Heart left ventricle (tissue), 16 donors: ENCODE measurements at regions of chrX and their contacts with region 1.

Region 1: DNA sequence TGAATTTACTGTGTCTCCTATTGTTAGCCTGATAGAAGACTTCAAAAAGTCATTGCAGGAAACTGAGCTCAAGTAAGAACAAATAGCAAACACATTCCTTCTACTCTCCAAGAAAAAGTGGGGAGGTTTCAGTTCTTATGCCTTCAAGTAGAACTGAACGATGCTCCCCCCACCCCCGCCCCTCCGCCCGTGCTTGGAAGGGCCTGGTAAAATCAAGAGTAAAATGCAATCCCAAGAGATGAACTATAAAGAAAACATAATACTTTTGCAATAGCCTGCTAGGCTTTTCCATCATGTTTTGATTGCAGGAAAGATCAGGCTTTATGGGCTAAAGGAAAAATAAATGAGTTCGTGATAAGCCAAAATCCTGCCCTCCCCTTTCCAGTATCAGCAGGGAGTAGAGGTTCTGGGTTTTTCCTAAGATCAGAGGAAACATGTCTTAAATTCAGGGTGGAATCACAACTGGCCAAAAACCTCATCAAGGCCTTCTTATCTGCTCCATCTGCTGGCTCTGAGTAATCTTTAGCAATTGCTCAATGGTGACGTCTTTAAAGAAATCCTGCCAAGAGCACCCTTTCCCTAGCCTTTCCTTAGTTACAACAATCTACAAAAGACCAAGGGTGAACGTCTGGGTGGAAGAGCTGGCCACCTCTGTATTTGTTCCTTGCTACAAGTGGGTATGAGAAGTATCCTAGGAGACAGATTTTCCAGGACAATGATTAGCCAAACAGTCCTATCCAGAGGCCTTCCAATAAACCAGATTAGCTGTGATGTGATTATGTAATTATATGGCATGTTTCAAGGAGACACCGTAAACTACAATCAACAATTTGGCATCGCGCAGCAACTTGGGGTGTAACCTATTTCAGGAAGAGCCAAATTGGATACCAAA is 66.3 kb upstream of the FAM9C start:
- DNase-seq: peak in 3 of 5 donors; percentile 38 to 42 (median 38)
- ATAC-seq: peak; percentile 81 to 93 (median 90)
- H3K4me3 ChIP-seq: no peak overlapping the region
- H3K27ac ChIP-seq: peak overlapping the region; percentile 33 to 86 (median 72)
- H3K4me1 ChIP-seq: peaks cover 0 to 29% (median 6%) of the 10 kb centered on the region in 12 donors
- H3K27me3 ChIP-seq: no peaks in the 10 kb centered on the region
- CTCF ChIP-seq: no peak
- POLR2A ChIP-seq: peak in 1 of 2 donors; percentile 15

Region 2: DNA sequence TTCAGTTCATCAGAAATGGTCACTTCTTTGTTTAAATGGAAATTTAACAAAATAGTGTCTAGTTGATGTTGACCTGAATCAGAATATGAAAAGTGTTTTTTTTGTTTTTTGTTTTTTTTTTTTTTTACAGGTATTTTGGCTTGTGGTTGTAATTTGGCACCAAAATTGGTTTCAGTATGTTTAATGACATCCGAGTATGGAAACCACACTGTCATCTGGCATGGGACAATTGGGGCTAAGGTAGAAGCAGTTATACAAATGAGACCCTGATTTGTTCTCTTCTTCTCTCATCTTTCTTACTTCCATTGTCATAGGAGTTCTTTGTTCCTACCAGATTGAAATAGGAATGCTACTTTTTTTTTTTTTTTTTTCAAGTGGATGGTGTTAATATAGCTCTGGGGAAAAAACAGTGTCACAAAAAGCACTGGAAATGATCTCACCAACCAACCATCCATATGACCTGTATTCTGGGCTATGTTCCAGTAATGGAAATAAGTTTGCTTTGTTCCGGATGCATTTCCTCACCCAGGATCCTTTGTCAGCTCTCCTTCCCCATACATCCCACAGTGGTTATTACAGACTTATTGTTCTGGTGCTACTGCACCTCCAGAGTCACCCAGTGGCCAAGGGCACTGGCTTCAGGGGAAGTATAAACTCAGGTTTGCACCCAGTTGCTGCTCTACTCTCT is 113.3 kb after region 1 on chrX:
- intact Hi-C with region 1: loop called in 2 of 10 experiments (anchors 1 to 10 kb)
- DNase-seq: peak in 2 of 5 donors; percentile 20 to 25
- ATAC-seq: peak; percentile 78 to 90 (median 86)
- H3K4me3 ChIP-seq: no peak overlapping the region
- H3K27ac ChIP-seq: peak overlapping the region in 7 of 12 donors; percentile 2 to 65 (median 42)
- H3K4me1 ChIP-seq: peaks cover 0 to 20% (median 2%) of the 10 kb centered on the region in 12 donors
- H3K27me3 ChIP-seq: peaks cover 0 to 8% (median 0%) of the 10 kb centered on the region in 9 donors
- CTCF ChIP-seq: peak in 2 of 12 donors; percentile 8 to 9
- POLR2A ChIP-seq: no peak

Region 3: DNA sequence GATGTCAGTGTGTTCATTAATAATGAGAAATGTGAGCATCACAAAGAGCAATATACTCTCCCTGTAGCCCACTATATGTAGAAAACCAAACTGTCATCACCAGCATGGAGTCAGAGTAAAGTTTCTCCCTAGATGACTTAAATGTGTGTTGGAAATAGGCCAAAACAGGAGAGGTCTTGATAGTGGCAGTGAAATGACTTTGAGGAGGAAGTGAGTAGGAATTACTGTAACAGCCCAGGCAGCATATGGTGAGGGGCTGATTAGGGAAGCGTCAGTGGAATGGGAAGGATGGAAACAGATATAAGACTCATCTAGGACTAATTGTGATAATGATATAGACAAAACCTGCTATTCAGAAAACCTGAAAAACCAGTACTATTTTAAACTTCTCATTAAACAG is 125.3 kb after region 1 on chrX:
- intact Hi-C with region 1: loop called in 1 of 10 experiments (anchors 10 kb)
- DNase-seq: no peak
- ATAC-seq: no peak
- H3K4me3 ChIP-seq: no peak overlapping the region
- H3K27ac ChIP-seq: no peak overlapping the region
- H3K4me1 ChIP-seq: peaks cover 0 to 8% (median 0%) of the 10 kb centered on the region in 12 donors
- H3K27me3 ChIP-seq: peaks cover 0 to 16% (median 0%) of the 10 kb centered on the region in 9 donors
- CTCF ChIP-seq: no peak
- POLR2A ChIP-seq: no peak

Region 4: DNA sequence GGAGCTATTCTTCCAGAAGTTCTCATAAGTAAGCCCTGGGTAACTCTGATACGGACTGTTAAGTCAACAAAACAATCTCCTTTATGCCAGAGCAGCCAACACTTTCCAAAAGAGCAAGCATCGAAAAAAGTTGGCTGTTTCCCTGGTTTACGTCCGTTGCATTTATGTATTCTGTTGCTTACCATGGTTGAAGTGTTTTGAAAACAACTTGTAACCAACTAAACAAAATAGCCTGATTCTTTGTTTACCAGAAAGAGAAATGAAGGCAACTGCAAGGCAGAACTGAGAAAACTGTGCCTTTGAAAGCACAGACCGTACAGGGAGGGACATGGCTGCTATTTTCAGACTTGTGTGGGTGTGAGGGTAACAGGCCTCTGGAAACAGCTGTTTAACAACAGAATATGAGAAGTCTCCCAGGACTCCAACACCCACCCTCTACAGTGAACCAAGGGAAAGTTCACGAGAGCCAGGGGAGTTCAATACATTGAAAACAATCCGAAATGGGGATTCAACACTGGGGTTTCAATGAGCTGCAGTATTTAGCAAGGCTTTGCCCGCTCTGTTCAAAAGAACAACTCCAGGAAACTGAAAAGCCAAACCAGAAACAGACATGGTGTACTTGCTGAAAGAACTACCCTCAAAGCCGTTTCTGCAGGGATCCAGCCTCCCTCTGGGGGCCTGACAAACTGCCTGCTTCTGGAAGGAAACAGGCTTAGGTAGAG is 362.9 kb after region 1 on chrX:
- intact Hi-C with region 1: loop called in 1 of 10 experiments (anchors 10 kb)
- DNase-seq: peak in 1 of 5 donors; percentile 20
- ATAC-seq: peak; percentile 65 to 89 (median 79)
- H3K4me3 ChIP-seq: peak overlapping the region in 7 of 12 donors; percentile 2 to 27 (median 15)
- H3K27ac ChIP-seq: peak overlapping the region; percentile 57 to 81 (median 74)
- H3K4me1 ChIP-seq: peaks cover 0 to 28% (median 4%) of the 10 kb centered on the region in 12 donors
- H3K27me3 ChIP-seq: peaks cover 0 to 25% (median 0%) of the 10 kb centered on the region in 9 donors
- CTCF ChIP-seq: no peak
- POLR2A ChIP-seq: no peak